T-cell (primary cell): ENCODE measurements at regions of chr11 and their contacts with region 1.

Region 1: GRCh38 chr11:73760679-73761402 is at the start of gene RAB6A:
- DNase-seq: peak; percentile 97 to 100 (median 100)
- ATAC-seq: peak; percentile 90 to 95 (median 92)
- H3K4me3 ChIP-seq: peak within 1 kb of the TSS; percentile 84 to 94
- H3K4me3 Mint-ChIP-seq: peak within 1 kb of the TSS; percentile 88 to 98 (median 90)
- H3K27ac ChIP-seq: peak within 1 kb of the TSS; percentile 74
- H3K27ac Mint-ChIP-seq: peak within 1 kb of the TSS; percentile 88 to 96
- H3K4me1 ChIP-seq: peaks cover 12 to 14% of the 10 kb centered on the region in 2 experiments
- H3K4me1 Mint-ChIP-seq: peaks cover 32 to 38% (median 35%) of the 10 kb centered on the region in 3 donors
- H3K27me3 ChIP-seq: peaks cover 0 to 7% of the 10 kb centered on the region in 2 experiments
- H3K27me3 Mint-ChIP-seq: no peaks in the 10 kb centered on the region
- total RNA-seq, gene RAB6A: 58.1 to 118 (median 102) TPM

Region 2: GRCh38 chr11:73633999-73634398 is 126.8 kb before region 1 on chr11:
- CTCF ChIA-PET with region 1: no interaction called
- POLR2A ChIA-PET with region 1: no interaction called
- DNase-seq: peak in 1 of 35 experiments; percentile 27
- ATAC-seq: peak; percentile 57 to 86 (median 82)
- H3K4me3 ChIP-seq: no peak overlapping the region
- H3K4me3 Mint-ChIP-seq: no peak overlapping the region
- H3K27ac ChIP-seq: no peak overlapping the region
- H3K27ac Mint-ChIP-seq: peak overlapping the region; percentile 57 to 82
- H3K4me1 ChIP-seq: peaks cover 7 to 14% of the 10 kb centered on the region in 2 experiments
- H3K4me1 Mint-ChIP-seq: peaks cover 6 to 16% (median 8%) of the 10 kb centered on the region in 3 donors
- H3K27me3 ChIP-seq: no peaks in the 10 kb centered on the region
- H3K27me3 Mint-ChIP-seq: no peaks in the 10 kb centered on the region

Region 3: DNA sequence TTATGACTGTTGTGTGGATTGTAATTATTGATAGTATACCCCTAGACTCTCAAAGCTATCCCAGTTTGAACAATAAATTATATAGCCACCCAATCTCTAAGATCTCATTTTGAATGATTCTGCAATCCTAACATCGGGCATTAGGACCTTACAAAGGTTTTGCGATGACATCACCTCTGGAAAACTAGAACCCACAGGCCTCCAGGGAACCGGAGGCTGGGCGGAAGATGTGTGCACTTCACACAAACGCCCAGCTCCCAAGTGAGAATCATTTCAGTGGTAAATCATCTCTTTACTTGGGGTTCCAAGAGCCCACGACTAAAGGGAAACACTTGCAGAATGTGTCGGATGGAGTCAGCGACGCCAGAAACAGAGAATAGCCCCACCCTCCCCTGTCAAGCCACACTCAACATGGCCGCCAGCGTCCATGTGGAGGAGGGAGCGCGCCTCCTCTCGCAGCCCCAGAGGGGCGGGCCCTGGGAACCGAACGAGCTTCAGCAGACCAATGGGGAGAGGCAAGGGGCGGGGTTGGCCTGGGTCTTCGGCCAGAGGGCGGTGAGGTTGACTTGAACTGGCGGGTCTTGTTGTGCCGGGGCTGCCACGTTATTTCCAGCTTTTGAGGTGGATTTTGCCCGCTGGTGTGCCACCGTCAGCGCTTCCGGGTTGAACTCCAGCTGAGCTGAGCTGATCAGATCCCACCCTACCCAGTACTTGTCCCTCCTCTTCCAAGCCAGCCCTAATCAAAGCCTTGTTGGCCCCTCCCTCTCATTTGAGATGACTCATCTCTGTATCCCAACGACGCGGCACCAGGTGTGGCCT is 18.5 kb after region 1 on chr11:
- CTCF ChIA-PET with region 1: interaction called in 1 of 2 experiments, 40 read pairs
- POLR2A ChIA-PET with region 1: interaction called, 14 to 29 read pairs
- DNase-seq: peak; percentile 94 to 99 (median 98)
- ATAC-seq: peak; percentile 96 to 99 (median 99)
- H3K4me3 ChIP-seq: peak overlapping the region; percentile 67 to 87
- H3K4me3 Mint-ChIP-seq: peak overlapping the region; percentile 89 to 94 (median 91)
- H3K27ac ChIP-seq: peak overlapping the region; percentile 95
- H3K27ac Mint-ChIP-seq: peak overlapping the region; percentile 99 to 100
- H3K4me1 ChIP-seq: peaks cover 8 to 9% of the 10 kb centered on the region in 2 experiments
- H3K4me1 Mint-ChIP-seq: peaks cover 7 to 17% (median 14%) of the 10 kb centered on the region in 3 donors
- H3K27me3 ChIP-seq: no peaks in the 10 kb centered on the region
- H3K27me3 Mint-ChIP-seq: no peaks in the 10 kb centered on the region